OCI-LY7 (cell line): ENCODE measurements at regions of chr11 and their contacts with region 1.

Region 1: GRCh38 chr11:94128746-94129511 is at the start of gene PANX1:
- DNase-seq: peak; percentile 88
- H3K4me3 ChIP-seq: peak within 1 kb of the TSS; percentile 87
- H3K27ac ChIP-seq: peak within 1 kb of the TSS; percentile 49
- H3K4me1 ChIP-seq: peaks cover 27% of the 10 kb centered on the region
- CTCF ChIP-seq: no peak
- total RNA-seq, gene PANX1: 14.3 and 16.5 TPM in 2 replicates

Region 2: DNA sequence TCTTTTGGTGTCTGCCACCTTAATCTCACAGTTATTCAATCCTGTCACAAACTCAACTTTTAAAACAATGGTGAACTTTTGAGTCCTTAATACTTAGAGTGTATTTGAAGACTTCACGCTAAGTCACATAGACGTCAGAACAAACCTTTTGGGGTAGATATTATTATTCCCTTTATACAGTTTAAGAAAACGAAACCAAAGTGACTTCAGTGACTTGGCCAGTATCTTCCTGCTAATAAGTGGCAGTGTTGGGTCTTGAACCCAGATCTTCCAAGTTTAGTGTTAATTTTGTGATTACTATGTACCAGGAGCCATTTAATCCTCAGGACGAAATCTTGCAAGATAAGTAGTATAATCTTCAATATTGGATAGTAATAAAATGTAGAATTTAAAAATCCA is 466.8 kb before region 1 on chr11:
- CTCF ChIA-PET with region 1: no interaction called
- POLR2A ChIA-PET with region 1: no interaction called
- intact Hi-C with region 1: loop called (anchors 5 kb)
- DNase-seq: peak; percentile 34
- H3K4me3 ChIP-seq: peak overlapping the region; percentile 97
- H3K27ac ChIP-seq: peak overlapping the region; percentile 78
- H3K4me1 ChIP-seq: peaks cover 28% of the 10 kb centered on the region
- CTCF ChIP-seq: no peak

Region 3: GRCh38 chr11:93942176-93942575 is 186.8 kb before region 1 on chr11:
- CTCF ChIA-PET with region 1: no interaction called
- POLR2A ChIA-PET with region 1: no interaction called
- intact Hi-C with region 1: no loop called
- DNase-seq: no peak
- H3K4me3 ChIP-seq: no peak overlapping the region
- H3K27ac ChIP-seq: no peak overlapping the region
- H3K4me1 ChIP-seq: no peaks in the 10 kb centered on the region
- CTCF ChIP-seq: no peak

Region 4: GRCh38 chr11:94493281-94494125 is 364.6 kb after region 1 on chr11 and contains the starts of genes ANKRD49 and MRE11:
- CTCF ChIA-PET with region 1: no interaction called
- POLR2A ChIA-PET with region 1: no interaction called
- intact Hi-C with region 1: loop called (anchors 5 kb)
- DNase-seq: peak; percentile 97
- H3K4me3 ChIP-seq: peak within 1 kb of the TSS; percentile 88
- H3K27ac ChIP-seq: peak within 1 kb of the TSS; percentile 58
- H3K4me1 ChIP-seq: peaks cover 25% of the 10 kb centered on the region
- CTCF ChIP-seq: no peak
- total RNA-seq, gene ANKRD49: 26.1 and 29.2 TPM in 2 replicates
- total RNA-seq, gene MRE11: 42.6 and 44.4 TPM in 2 replicates

Region 5: DNA sequence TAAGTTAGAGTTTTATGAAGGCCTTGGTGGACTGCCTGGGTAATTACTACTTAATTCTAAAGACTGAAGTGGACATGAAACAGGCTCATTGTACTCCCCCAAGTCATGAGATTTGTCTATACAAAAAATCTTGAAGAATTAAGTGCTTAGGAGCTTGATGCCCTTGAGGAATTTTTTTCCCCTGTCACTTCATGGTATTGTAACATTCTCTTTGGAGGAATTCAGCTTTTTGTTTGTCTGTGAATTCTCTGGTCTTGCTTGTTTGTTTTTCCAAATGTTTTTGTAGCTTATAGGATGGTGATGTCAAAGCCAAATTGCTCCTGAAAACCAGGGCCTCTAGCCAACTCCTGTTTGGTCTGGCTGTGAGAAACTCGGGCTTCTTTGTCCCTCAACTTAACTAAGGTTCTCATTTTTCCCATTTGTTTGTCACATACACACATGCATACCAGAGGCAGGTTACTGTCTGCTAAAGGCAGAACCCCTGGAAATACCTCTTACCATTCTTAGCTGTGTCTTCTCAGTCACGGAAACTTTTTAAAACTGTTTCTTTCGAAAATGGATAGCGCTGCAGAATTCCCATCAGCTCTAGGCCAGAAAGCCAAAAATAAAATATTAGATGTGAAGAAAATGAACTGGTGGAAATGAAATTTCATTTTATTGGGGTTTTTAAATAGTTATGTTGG is 706.1 kb after region 1 on chr11:
- CTCF ChIA-PET with region 1: no interaction called
- POLR2A ChIA-PET with region 1: no interaction called
- intact Hi-C with region 1: no loop called
- DNase-seq: no peak
- H3K4me3 ChIP-seq: no peak overlapping the region
- H3K27ac ChIP-seq: no peak overlapping the region
- H3K4me1 ChIP-seq: no peaks in the 10 kb centered on the region
- CTCF ChIP-seq: no peak

Region 6: DNA sequence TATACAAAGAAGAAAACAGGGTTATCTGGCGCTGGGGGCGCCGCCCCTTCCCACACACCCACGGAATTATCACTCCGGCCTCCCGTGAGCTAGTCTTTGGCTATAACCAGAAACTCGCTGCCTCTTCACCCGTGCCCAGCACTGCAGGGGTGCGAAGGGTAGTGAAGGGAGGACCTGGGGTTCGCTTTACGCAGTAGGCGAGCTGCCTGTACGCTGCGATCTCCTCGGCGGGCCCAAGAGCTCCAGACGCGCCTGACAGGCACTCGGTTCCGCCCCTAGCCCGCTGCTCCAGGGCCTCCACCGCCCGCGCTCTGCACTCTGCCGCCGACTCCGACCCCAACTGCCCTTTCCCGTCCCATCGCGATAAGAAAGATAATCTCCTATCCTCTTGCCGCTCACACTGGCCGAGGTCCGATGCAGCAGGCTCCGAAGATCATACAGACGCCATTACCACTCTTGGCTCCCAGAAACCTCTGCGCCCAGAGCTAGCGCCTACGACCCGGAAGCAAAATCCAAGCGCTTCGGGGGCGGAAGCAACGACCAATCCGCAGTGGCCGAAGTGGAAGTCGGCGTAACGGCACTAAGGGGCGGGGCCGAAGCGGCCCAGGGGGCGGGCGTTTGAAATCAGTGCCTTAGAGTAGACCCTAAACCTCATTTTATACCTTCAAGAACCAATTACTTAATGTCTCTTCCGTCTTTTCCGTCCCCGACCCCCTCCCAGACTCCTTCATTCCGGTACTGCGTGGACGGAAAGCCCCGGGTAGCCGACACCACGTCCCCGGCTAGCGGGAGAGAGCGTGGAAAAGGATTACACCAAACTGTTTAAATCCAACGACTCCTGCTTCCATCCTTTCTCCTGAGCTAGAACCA is 844.4 kb after region 1 on chr11 and contains the starts of genes CWC15 and KDM4D:
- CTCF ChIA-PET with region 1: no interaction called
- POLR2A ChIA-PET with region 1: no interaction called
- intact Hi-C with region 1: loop called (anchors 2 kb)
- DNase-seq: peak; percentile 95
- H3K4me3 ChIP-seq: peak within 1 kb of the TSS; percentile 94
- H3K27ac ChIP-seq: peak within 1 kb of the TSS; percentile 39
- H3K4me1 ChIP-seq: peaks cover 10% of the 10 kb centered on the region
- CTCF ChIP-seq: no peak
- total RNA-seq, gene CWC15: 42.5 and 52.3 TPM in 2 replicates
- total RNA-seq, gene KDM4D: 0.62 and 1.0 TPM in 2 replicates